ENCODE measurements at regions of chr1 and their contacts with region 1.

Region 1: GRCh38 chr1:3624200-3625136 is at the start of gene TPRG1L:
- DNase-seq: peak; percentile 98
- H3K4me3 Mint-ChIP-seq: peak within 1 kb of the TSS; percentile 94
- H3K27ac Mint-ChIP-seq: peak within 1 kb of the TSS; percentile 93
- H3K4me1 Mint-ChIP-seq: peaks cover 27% of the 10 kb centered on the region
- H3K27me3 Mint-ChIP-seq: peaks cover 8% of the 10 kb centered on the region
- total RNA-seq, gene TPRG1L: 10.3 and 12.5 TPM in 2 replicates

Region 2: GRCh38 chr1:3156936-3157335 is 467.5 kb before region 1 on chr1:
- intact Hi-C with region 1: no loop called
- DNase-seq: no peak
- H3K4me3 Mint-ChIP-seq: no peak overlapping the region
- H3K27ac Mint-ChIP-seq: no peak overlapping the region
- H3K4me1 Mint-ChIP-seq: no peaks in the 10 kb centered on the region
- H3K27me3 Mint-ChIP-seq: peaks cover 5% of the 10 kb centered on the region

Region 3: DNA sequence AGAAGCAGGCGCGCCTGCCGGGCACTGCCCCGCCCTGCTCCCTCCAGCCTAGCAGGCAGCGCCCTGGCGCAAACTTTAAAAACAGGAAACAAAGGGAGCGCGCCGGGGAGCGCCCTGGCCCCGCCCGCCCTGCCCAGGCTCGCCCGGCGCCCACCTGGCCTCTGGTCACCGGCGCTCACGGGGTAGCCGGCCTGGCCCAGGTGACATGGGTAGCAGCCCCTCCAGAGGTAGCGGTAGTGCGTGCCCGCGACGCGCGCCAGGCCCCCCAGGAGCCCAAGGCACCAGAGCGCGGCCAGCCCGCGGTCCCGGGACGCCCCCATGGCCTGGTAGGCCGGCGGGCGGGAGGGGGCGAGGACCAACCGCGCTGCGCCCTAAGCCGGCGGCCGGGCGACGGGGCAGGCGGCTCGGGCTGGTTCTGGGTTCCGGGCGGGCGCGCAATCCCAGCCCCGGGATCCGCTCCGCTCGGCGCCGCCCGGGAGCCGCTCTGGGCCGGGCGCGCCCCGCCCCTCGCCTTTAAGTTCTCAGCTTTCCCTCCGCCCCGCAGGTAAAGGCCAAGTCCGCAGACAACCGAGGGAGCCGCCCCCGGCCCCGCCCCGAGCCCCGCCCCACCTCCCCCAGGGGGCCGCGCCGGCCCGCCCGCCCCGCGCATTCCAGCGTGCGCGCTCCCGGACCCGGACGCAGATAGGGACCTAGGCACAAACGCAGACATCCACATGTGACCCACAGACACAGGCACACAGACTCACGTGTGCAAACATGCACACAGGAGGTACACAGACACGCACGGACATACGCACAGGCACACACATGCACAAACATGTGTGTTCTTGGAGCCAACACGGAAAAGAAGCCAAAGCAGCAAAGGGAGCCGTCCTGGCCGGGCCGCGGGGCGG is 93.3 kb before region 1 on chr1:
- intact Hi-C with region 1: loop called (anchors 1 kb)
- DNase-seq: peak; percentile 63
- H3K4me3 Mint-ChIP-seq: peak overlapping the region; percentile 78
- H3K27ac Mint-ChIP-seq: peak overlapping the region; percentile 87
- H3K4me1 Mint-ChIP-seq: no peaks in the 10 kb centered on the region
- H3K27me3 Mint-ChIP-seq: peaks cover 2% of the 10 kb centered on the region

Region 4: DNA sequence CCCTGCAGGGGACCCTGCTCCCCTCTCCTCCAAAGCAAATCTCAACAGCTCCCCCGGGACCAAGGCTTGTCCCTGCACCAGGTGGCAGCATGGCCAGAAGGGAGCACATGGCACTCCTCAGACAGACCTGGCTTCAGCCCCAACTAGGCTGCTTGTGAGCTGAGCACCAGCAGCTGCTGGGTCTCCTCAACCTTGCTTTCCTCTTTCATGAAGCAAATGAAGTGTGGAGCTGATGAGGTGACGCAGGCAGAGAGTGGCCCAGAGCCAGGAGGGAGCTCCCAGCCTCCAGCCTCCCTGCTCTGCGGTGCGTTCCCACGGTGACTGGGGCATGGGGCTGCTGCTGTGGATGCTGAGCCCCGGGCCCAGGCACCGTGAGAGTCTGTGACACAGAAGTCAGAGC is 47.2 kb before region 1 on chr1:
- intact Hi-C with region 1: no loop called
- DNase-seq: no peak
- H3K4me3 Mint-ChIP-seq: no peak overlapping the region
- H3K27ac Mint-ChIP-seq: no peak overlapping the region
- H3K4me1 Mint-ChIP-seq: no peaks in the 10 kb centered on the region
- H3K27me3 Mint-ChIP-seq: no peaks in the 10 kb centered on the region

Region 5: DNA sequence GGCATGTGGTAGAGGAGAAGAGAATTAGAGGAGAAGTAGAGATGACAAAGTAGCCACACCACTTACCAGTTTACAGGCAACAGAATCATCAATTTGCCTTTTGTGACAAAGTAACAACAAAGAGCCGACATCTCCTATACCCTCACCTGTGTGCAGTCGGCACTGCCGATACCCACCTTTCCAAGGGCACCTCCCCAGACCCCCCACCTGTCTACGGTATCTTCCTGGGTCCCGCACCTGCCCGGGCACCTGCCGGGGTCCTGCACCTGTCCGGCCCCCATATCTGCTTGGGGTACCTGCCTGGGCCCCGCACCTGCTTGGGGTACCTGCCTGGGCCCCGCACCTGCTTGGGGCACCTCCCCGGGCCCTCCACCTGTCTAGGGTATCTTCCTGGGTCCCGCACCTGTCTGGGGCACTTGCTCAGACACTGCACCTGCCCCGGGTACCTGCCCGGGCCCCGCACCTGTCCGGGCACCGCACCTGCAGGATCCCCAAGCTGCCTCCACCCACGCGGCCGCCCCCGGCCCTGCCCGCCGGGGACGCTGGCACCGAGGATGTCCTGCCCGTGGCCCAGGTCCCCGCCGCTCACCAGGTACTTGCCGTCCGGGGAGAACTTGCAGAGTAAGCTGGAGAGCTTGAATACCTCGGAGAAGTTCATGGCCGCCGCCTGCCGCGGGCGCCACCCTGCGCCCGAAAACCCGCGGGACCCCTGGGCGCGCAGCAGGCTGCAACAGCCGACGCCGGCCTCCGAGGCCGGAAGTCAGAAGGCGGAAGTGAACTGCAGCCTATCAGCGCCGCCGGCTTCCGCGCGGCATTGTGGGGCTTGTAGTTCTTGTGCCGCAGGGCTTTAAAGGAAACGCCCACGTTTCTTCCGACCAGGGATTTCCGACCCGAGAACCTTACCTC is 25.1 kb after region 1 on chr1 and contains the start of gene WRAP73:
- intact Hi-C with region 1: loop called (anchors 1 kb)
- DNase-seq: peak; percentile 86
- H3K4me3 Mint-ChIP-seq: peak within 1 kb of the TSS; percentile 84
- H3K27ac Mint-ChIP-seq: peak within 1 kb of the TSS; percentile 58
- H3K4me1 Mint-ChIP-seq: peaks cover 23% of the 10 kb centered on the region
- H3K27me3 Mint-ChIP-seq: peaks cover 25% of the 10 kb centered on the region
- total RNA-seq, gene WRAP73: 44.9 and 45.5 TPM in 2 replicates

Region 6: GRCh38 chr1:3683992-3684391 is 59.5 kb after region 1 on chr1:
- intact Hi-C with region 1: no loop called
- DNase-seq: no peak
- H3K4me3 Mint-ChIP-seq: no peak overlapping the region
- H3K27ac Mint-ChIP-seq: no peak overlapping the region
- H3K4me1 Mint-ChIP-seq: peaks cover 7% of the 10 kb centered on the region
- H3K27me3 Mint-ChIP-seq: peaks cover 5% of the 10 kb centered on the region

Region 7: GRCh38 chr1:3695326-3696217 is 71.1 kb after region 1 on chr1:
- intact Hi-C with region 1: no loop called
- DNase-seq: no peak
- H3K4me3 Mint-ChIP-seq: no peak overlapping the region
- H3K27ac Mint-ChIP-seq: no peak overlapping the region
- H3K4me1 Mint-ChIP-seq: no peaks in the 10 kb centered on the region
- H3K27me3 Mint-ChIP-seq: no peaks in the 10 kb centered on the region

Region 8: DNA sequence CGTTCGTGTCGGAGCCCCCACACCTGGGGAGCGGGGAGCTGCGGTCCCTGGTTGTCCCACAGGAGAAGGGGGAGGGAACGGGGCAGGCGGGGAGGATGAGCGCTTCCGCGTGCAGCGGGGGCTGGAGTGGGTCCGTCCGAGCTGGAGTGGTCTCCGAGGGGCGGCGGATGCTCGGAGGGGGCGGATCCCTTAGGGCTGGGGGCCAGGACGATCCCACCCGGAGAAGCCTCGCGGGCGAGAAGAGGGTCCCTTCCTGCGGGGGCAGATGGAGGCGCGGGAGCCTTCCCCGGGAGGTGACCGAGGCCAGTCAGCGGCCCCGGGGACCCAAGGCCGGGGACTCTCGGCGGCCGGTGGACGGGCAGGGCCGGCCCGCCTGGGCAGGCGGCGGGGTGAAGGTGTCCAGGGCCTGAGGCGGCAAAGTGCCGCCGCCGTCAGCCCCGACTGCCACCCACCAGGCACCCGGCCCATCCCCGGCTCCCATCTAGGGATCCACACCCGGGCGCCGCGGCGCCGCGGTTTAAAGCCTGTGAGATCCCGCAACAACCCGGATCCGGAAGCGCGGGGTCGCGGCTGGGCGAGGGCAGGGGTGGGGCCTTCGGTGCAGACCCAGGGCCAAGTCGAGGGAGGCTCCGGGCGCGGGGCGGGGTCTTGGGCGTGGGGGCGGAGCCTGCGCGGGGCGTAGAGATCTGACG is 122.5 kb after region 1 on chr1:
- intact Hi-C with region 1: loop called (anchors 10 kb)
- DNase-seq: peak; percentile 86
- H3K4me3 Mint-ChIP-seq: peak overlapping the region; percentile 84
- H3K27ac Mint-ChIP-seq: no peak overlapping the region
- H3K4me1 Mint-ChIP-seq: peaks cover 31% of the 10 kb centered on the region
- H3K27me3 Mint-ChIP-seq: peaks cover 2% of the 10 kb centered on the region

Region 9: DNA sequence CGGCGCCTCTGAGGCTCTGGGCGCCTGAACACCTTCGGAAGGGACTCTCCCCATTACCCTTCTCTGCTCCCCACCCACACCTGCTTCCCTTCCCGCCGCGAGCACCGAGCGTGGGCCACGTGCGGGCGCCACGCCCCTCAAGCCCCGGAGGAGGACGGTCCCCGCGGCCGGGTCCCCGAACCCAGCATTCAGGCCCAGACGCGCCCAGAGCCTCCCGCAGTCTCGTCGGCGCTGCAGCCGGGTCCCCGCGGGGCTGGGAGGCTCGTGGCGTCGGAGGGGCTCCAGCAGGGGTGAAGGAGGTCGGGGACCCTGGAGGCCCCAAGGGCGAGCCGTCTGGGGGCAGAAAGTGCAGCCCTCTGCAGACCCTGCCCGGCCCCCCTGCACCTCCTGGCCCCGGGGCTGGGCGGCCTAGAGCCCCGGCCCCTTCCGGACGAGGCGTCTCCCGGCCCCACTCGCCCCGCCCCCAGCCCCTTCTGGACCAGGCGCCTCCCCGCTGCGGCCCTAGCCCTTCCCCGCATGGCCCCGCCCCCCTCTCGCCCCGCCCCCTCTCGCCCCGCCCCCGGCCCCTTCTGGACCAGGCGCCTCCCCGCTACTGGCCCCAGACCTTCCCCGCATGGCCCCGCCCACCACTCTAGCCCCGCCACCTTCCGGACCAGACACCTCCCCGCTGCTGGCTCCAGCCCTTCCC is 147.7 kb after region 1 on chr1:
- intact Hi-C with region 1: loop called (anchors 10 kb)
- DNase-seq: peak; percentile 80
- H3K4me3 Mint-ChIP-seq: peak overlapping the region; percentile 75
- H3K27ac Mint-ChIP-seq: peak overlapping the region; percentile 52
- H3K4me1 Mint-ChIP-seq: peaks cover 8% of the 10 kb centered on the region
- H3K27me3 Mint-ChIP-seq: peaks cover 9% of the 10 kb centered on the region